Activated T-helper 1 cell treated with anti-CD3 and anti-CD28 coated beads, Interleukin-12 subunit alpha, Interleukin-12 subunit beta, Interleukin-2, Interleukin-4 antibody, amounts not matched to agents 30 ng/mL and 10 ng/mL and 1 ng/mL, durations not matched to agents 14 hours and 24 hours and 36 hours (primary cell): ENCODE measurements at regions of chr11 and their contacts with region 1.

Region 1: GRCh38 chr11:63838678-63839507 is at the start of gene MARK2:
- DNase-seq: peak; percentile 99
- H3K4me3 Mint-ChIP-seq: peak within 1 kb of the TSS; percentile 88
- H3K27ac Mint-ChIP-seq: peak within 1 kb of the TSS; percentile 83
- H3K4me1 Mint-ChIP-seq: peaks cover 59% of the 10 kb centered on the region
- H3K27me3 Mint-ChIP-seq: peaks cover 5% of the 10 kb centered on the region
- total RNA-seq, gene MARK2: 44.7 and 46.0 TPM in 2 replicates

Region 2: DNA sequence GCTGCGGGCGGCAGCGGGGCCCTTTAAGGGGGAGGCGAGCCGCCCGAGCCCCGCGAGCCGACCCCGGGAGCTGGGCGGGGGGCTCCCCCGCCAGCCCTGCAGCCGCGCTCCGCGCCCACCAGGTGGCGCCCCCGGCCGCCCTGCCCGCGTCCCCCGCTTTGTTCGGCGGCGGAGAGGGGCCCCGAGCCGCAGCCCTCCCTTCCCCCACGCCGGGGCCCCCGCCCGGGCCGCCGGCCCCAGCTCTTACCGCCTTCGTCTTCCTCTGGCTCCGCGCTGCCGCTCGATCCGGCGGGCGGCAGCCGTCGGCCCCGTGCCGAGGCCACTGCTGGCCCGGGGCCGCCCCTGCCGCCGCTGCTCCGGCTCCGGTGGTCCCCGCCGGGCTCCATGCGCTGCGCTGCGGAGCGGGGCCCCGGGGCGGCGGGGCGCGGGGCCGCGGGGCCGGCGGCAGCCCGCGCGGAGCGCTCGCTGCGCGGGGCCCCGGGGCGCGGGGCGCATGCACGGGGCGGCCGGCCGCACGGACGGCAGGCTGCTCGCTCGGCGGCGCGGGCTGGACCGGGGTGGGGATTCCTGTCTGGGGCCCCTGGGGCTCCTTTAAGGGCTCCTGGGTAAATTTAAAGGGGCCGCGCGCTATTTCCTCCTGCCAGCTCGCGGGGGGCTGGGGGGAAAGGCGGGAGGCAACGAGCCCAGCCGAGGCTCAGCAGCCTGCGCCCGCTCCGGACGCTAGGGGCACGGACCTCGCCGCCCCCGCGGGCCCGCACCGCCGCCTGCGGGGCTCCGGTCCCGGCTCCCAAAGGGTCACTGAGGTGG is 70.5 kb before region 1 on chr11 and contains the start of gene ZFTA:
- intact Hi-C with region 1: loop called (anchors 1 kb)
- DNase-seq: peak; percentile 45
- H3K4me3 Mint-ChIP-seq: peak within 1 kb of the TSS; percentile 87
- H3K27ac Mint-ChIP-seq: peak within 1 kb of the TSS; percentile 35
- H3K4me1 Mint-ChIP-seq: peaks cover 14% of the 10 kb centered on the region
- H3K27me3 Mint-ChIP-seq: peaks cover 33% of the 10 kb centered on the region
- total RNA-seq, gene ZFTA: 3.8 and 5.3 TPM in 2 replicates

Region 3: GRCh38 chr11:63866211-63866610 is 27.3 kb after region 1 on chr11:
- intact Hi-C with region 1: loop called (anchors 1 kb)
- DNase-seq: peak; percentile 60
- H3K4me3 Mint-ChIP-seq: peak overlapping the region; percentile 68
- H3K27ac Mint-ChIP-seq: peak overlapping the region; percentile 45
- H3K4me1 Mint-ChIP-seq: peaks cover 78% of the 10 kb centered on the region
- H3K27me3 Mint-ChIP-seq: no peaks in the 10 kb centered on the region

Region 4: GRCh38 chr11:63906585-63906984 is 67.7 kb after region 1 on chr11:
- intact Hi-C with region 1: loop called (anchors 1 kb)
- DNase-seq: peak; percentile 20
- H3K4me3 Mint-ChIP-seq: no peak overlapping the region
- H3K27ac Mint-ChIP-seq: no peak overlapping the region
- H3K4me1 Mint-ChIP-seq: no peaks in the 10 kb centered on the region
- H3K27me3 Mint-ChIP-seq: no peaks in the 10 kb centered on the region

Region 5: DNA sequence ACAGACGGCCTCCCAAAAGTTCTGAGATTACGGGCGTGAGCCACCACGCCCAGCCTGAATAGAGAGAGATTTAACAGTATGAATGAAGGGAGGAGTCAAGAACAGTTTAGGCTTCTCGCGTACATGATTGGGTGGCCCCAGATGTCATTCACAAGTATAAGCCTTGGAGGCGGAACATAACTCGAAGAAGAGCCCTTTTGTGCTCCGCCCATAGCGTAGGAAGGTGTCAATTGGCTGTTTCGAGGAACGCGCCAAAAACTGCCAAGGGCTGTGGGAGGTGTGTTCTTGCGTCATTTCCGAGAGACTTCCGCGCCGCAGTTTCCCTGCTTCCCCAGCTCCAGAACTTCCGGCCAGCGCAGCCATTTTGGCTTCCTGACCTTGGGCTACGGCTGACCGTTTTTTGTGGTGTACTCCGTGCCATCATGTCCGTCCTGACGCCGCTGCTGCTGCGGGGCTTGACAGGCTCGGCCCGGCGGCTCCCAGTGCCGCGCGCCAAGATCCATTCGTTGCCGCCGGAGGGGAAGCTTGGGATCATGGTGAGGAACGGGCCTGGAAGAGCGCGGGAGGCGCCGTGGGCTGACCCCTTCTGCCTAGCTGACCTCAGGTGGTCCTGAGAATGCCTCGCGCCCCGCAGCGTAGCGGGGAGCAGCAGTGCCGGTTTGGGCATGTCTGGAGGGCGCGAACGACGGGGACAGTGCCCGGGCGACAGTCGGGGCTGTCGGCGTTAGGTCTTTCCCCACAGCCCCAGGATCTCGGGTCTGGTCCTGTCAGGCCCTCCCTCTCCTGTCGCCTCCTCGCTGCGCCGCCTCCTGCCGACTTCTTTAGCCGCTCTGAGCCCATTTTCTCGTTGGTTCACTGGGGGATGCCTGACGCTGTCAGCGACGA is 135.6 kb after region 1 on chr11 and contains the start of gene COX8A:
- intact Hi-C with region 1: loop called (anchors 1 kb)
- DNase-seq: peak; percentile 96
- H3K4me3 Mint-ChIP-seq: peak within 1 kb of the TSS; percentile 100
- H3K27ac Mint-ChIP-seq: peak within 1 kb of the TSS; percentile 97
- H3K4me1 Mint-ChIP-seq: peaks cover 17% of the 10 kb centered on the region
- H3K27me3 Mint-ChIP-seq: peaks cover 8% of the 10 kb centered on the region
- total RNA-seq, gene COX8A: 289 and 291 TPM in 2 replicates

Region 6: GRCh38 chr11:64185816-64186498 is 347.1 kb after region 1 on chr11 and contains the start of gene STIP1:
- intact Hi-C with region 1: loop called (anchors 1 kb)
- DNase-seq: peak; percentile 99
- H3K4me3 Mint-ChIP-seq: peak within 1 kb of the TSS; percentile 95
- H3K27ac Mint-ChIP-seq: peak within 1 kb of the TSS; percentile 99
- H3K4me1 Mint-ChIP-seq: peaks cover 39% of the 10 kb centered on the region
- H3K27me3 Mint-ChIP-seq: peaks cover 2% of the 10 kb centered on the region
- total RNA-seq, gene STIP1: 493 and 495 TPM in 2 replicates